Activated CD4-positive, alpha-beta T cell treated with anti-CD3 and anti-CD28 coated beads for 36 hours (primary cell): ENCODE measurements at regions of chr2 and their contacts with region 1.

Region 1: DNA sequence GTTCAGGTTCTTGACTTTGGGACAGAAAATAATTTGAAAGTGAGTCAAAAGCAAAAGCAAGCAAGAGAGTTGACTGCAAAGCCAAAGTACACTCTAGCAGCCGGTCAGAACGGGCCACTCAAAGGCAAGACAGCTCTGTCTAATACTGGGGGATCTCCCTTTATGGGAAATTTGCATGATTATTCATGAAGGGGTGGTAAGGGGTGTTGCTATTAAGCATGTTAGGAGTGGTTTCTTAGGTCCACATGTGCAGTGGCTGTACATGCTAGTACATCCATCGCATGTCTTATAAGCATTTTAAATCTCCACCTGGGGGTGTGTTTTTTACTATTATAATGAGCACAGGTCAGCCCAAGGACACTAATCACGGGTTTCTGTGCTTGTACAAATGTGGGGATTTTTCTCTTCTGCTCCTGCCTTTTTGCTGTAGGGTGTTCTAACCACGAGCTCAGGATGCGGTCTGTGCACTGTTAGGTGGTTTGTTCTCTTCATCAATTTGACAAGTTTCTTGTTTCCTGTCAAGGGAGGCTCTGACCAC is 60.2 kb upstream of the SPP2 start:
- DNase-seq: peak; percentile 80
- ATAC-seq: peak; percentile 92
- H3K4me3 Mint-ChIP-seq: peak overlapping the region; percentile 13
- H3K27ac Mint-ChIP-seq: peak overlapping the region; percentile 28
- H3K4me1 Mint-ChIP-seq: peaks cover 48% of the 10 kb centered on the region
- H3K27me3 Mint-ChIP-seq: no peaks in the 10 kb centered on the region

Region 2: GRCh38 chr2:233832869-233833311 is 157.4 kb before region 1 on chr2:
- CTCF ChIA-PET with region 1: no interaction called
- POLR2A ChIA-PET with region 1: no interaction called
- intact Hi-C with region 1: no loop called
- DNase-seq: no peak
- ATAC-seq: no peak
- H3K4me3 Mint-ChIP-seq: no peak overlapping the region
- H3K27ac Mint-ChIP-seq: no peak overlapping the region
- H3K4me1 Mint-ChIP-seq: peaks cover 3% of the 10 kb centered on the region
- H3K27me3 Mint-ChIP-seq: no peaks in the 10 kb centered on the region

Region 3: GRCh38 chr2:234001380-234002160 is 11.2 kb after region 1 on chr2:
- CTCF ChIA-PET with region 1: no interaction called
- POLR2A ChIA-PET with region 1: no interaction called
- intact Hi-C with region 1: loop called in 1 of 2 experiments (anchors 1 kb)
- DNase-seq: no peak
- ATAC-seq: peak; percentile 48
- H3K4me3 Mint-ChIP-seq: no peak overlapping the region
- H3K27ac Mint-ChIP-seq: peak overlapping the region; percentile 72
- H3K4me1 Mint-ChIP-seq: peaks cover 24% of the 10 kb centered on the region
- H3K27me3 Mint-ChIP-seq: no peaks in the 10 kb centered on the region

Region 4: GRCh38 chr2:234025466-234026185 is 35.3 kb after region 1 on chr2:
- CTCF ChIA-PET with region 1: interaction called, 5 read pairs
- POLR2A ChIA-PET with region 1: no interaction called
- intact Hi-C with region 1: loop called in 1 of 2 experiments (anchors 5 kb)
- DNase-seq: no peak
- ATAC-seq: peak; percentile 90
- H3K4me3 Mint-ChIP-seq: peak overlapping the region; percentile 62
- H3K27ac Mint-ChIP-seq: peak overlapping the region; percentile 33
- H3K4me1 Mint-ChIP-seq: peaks cover 35% of the 10 kb centered on the region
- H3K27me3 Mint-ChIP-seq: peaks cover 2% of the 10 kb centered on the region